CD8-positive, alpha-beta T cell (primary cell): ENCODE measurements at regions of chrX and their contacts with region 1.

Region 1: GRCh38 chrX:120499301-120500072 is 30.4 kb upstream of the LAMP2 start:
- DNase-seq: no peak
- ATAC-seq: no peak
- H3K4me3 ChIP-seq: no peak overlapping the region
- H3K4me3 Mint-ChIP-seq: no peak overlapping the region
- H3K27ac ChIP-seq: no peak overlapping the region
- H3K27ac Mint-ChIP-seq: no peak overlapping the region
- H3K4me1 ChIP-seq: no peaks in the 10 kb centered on the region
- H3K4me1 Mint-ChIP-seq: peaks cover 5% of the 10 kb centered on the region
- H3K27me3 ChIP-seq: no peaks in the 10 kb centered on the region
- H3K27me3 Mint-ChIP-seq: no peaks in the 10 kb centered on the region
- CTCF ChIP-seq: no peak

Region 2: GRCh38 chrX:120769576-120770341 is 270.3 kb after region 1 on chrX:
- CTCF ChIA-PET with region 1: interaction called, 3 read pairs
- POLR2A ChIA-PET with region 1: no interaction called
- intact Hi-C with region 1: loop called in 1 of 2 experiments (anchors 5 kb)
- DNase-seq: peak in 2 of 9 experiments; percentile 29 to 48
- ATAC-seq: no peak
- H3K4me3 ChIP-seq: no peak overlapping the region
- H3K4me3 Mint-ChIP-seq: no peak overlapping the region
- H3K27ac ChIP-seq: no peak overlapping the region
- H3K27ac Mint-ChIP-seq: no peak overlapping the region
- H3K4me1 ChIP-seq: no peaks in the 10 kb centered on the region
- H3K4me1 Mint-ChIP-seq: peaks cover 2% of the 10 kb centered on the region
- H3K27me3 ChIP-seq: no peaks in the 10 kb centered on the region
- H3K27me3 Mint-ChIP-seq: no peaks in the 10 kb centered on the region
- CTCF ChIP-seq: peak; percentile 24

Region 3: GRCh38 chrX:121733514-121733913 is 1234.0 kb after region 1 on chrX:
- CTCF ChIA-PET with region 1: no interaction called
- POLR2A ChIA-PET with region 1: no interaction called
- intact Hi-C with region 1: no loop called
- DNase-seq: no peak
- ATAC-seq: no peak
- H3K4me3 ChIP-seq: no peak overlapping the region
- H3K4me3 Mint-ChIP-seq: no peak overlapping the region
- H3K27ac ChIP-seq: no peak overlapping the region
- H3K27ac Mint-ChIP-seq: no peak overlapping the region
- H3K4me1 ChIP-seq: no peaks in the 10 kb centered on the region
- H3K4me1 Mint-ChIP-seq: no peaks in the 10 kb centered on the region
- H3K27me3 ChIP-seq: no peaks in the 10 kb centered on the region
- H3K27me3 Mint-ChIP-seq: no peaks in the 10 kb centered on the region
- CTCF ChIP-seq: no peak